ENCODE measurements at regions of chr19 and their contacts with region 1.

Region 1: DNA sequence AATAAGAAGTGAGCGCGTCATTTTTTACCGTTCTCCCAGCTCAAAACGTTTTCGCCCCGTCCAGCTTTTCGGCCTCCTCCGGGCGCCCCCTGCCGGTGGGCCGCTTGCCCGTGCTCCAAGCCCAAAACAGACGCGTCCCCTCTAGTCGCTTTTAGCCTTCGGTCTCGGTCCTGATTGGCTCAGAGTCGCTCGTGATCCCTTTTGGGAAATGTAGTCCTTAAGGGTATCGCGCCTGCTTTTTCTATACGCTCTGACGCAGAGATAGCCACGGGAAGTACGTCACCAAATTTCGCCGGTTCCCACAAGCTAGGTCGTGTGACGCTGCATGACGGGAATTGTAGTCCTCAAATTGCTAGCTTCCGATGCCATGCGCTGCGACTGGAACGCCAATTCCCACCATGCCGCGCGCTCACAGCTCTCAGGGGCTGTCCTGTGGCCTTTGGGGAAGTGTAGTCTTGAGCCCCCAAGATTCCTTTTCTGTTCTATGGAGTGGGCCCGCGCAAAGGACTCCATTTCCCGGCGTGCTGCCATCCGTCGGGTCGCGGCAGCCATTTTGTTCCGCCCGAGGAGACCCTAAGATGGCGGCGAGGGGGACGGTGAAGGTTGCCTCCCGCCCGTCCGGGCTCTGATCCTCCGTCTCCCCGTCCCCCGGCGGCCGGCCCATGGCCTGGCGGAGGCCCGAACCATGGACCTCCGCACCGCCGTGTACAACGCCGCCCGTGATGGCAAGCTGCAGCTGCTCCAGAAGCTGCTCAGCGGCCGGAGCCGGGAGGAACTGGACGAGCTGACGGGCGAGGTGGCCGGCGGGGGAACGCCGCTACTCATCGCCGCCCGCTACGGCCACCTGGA is at the start of gene FEM1A:
- DNase-seq: peak; percentile 99 to 100 (median 100)
- ATAC-seq: peak; percentile 95
- H3K4me3 ChIP-seq: peak within 1 kb of the TSS; percentile 86 to 100
- H3K27ac ChIP-seq: peak within 1 kb of the TSS; percentile 71 to 95 (median 94)
- H3K4me1 ChIP-seq: peaks cover 48% of the 10 kb centered on the region
- H3K27me3 ChIP-seq: no peaks in the 10 kb centered on the region
- CTCF ChIP-seq: peak; percentile 96 to 100 (median 99)
- POLR2A ChIP-seq: peak; percentile 26 to 88 (median 81)
- total RNA-seq, gene FEM1A: 8.0 to 20.4 TPM

Region 2: GRCh38 chr19:4738734-4739133 is 52.7 kb before region 1 on chr19:
- intact Hi-C with region 1: loop called (anchors 5 kb)
- DNase-seq: no peak
- ATAC-seq: no peak
- H3K4me3 ChIP-seq: no peak overlapping the region
- H3K27ac ChIP-seq: no peak overlapping the region
- H3K4me1 ChIP-seq: no peaks in the 10 kb centered on the region
- H3K27me3 ChIP-seq: no peaks in the 10 kb centered on the region
- CTCF ChIP-seq: no peak
- POLR2A ChIP-seq: no peak

Measured in body of pancreas (tissue), 4 donors.